Naive thymus-derived CD4-positive, alpha-beta T cell (primary cell): ENCODE measurements at regions of chr6 and their contacts with region 1.

Region 1: GRCh38 chr6:12637960-12638641 is 78.5 kb upstream of the PHACTR1 start:
- DNase-seq: peak in 2 of 9 donors; percentile 3 to 37
- ATAC-seq: peak; percentile 65
- H3K4me3 ChIP-seq: no peak overlapping the region
- H3K4me3 Mint-ChIP-seq: no peak overlapping the region
- H3K27ac ChIP-seq: no peak overlapping the region
- H3K27ac Mint-ChIP-seq: no peak overlapping the region
- H3K4me1 ChIP-seq: no peaks in the 10 kb centered on the region
- H3K4me1 Mint-ChIP-seq: peaks cover 0 to 3% (median 0%) of the 10 kb centered on the region in 7 donors
- H3K27me3 ChIP-seq: no peaks in the 10 kb centered on the region
- H3K27me3 Mint-ChIP-seq: peaks cover 15 to 54% (median 45%) of the 10 kb centered on the region in 5 donors

Region 2: DNA sequence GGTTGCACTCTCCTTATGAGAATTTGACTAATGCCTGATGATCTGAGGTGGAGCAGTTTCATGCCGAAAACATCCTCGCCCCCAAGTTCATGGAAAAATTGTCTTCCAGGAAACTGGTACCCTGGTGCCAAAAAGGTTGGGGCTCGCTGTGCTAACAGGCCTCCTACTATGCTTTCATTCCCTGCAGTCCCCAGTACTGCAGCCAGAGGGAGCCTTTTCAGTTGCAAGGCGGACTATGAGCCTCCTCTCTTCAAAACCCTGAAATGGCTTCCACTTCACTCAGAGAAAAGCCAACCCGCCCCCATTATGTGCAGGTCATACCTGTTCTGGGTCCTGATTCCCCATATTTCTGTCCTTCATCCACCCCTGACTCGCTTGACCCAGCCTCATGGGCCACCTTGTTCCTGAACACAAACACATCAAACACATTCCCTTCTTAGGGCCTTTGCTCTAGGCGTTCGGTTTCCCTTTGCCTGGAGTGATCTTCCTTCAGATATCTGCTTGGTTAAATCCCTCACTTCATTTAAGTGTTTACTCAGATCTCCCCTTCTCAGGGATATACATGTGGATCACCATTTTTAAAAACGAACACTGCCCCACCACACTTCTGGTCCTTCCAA is 252.2 kb after region 1 on chr6:
- CTCF ChIA-PET with region 1: no interaction called
- POLR2A ChIA-PET with region 1: no interaction called
- intact Hi-C with region 1: loop called (anchors 5 kb)
- DNase-seq: no peak
- ATAC-seq: no peak
- H3K4me3 ChIP-seq: no peak overlapping the region
- H3K4me3 Mint-ChIP-seq: no peak overlapping the region
- H3K27ac ChIP-seq: no peak overlapping the region
- H3K27ac Mint-ChIP-seq: no peak overlapping the region
- H3K4me1 ChIP-seq: no peaks in the 10 kb centered on the region
- H3K4me1 Mint-ChIP-seq: peaks cover 0 to 2% (median 0%) of the 10 kb centered on the region in 7 donors
- H3K27me3 ChIP-seq: peaks cover 0 to 4% of the 10 kb centered on the region in 2 donors
- H3K27me3 Mint-ChIP-seq: peaks cover 8 to 35% (median 20%) of the 10 kb centered on the region in 5 donors